Activated naive CD4-positive, alpha-beta T cell treated with anti-CD3 and anti-CD28 coated beads, Interleukin-2, amount 10 ng/mL, durations not matched to agents 7 days and 5 days (primary cell): ENCODE measurements at regions of chr1 and their contacts with region 1.

Region 1: GRCh38 chr1:31923901-31924535 is 14.2 kb downstream of the PTP4A2 start:
- DNase-seq: no peak
- H3K4me3 Mint-ChIP-seq: peak overlapping the region; percentile 24
- H3K27ac Mint-ChIP-seq: peak overlapping the region; percentile 79
- H3K4me1 Mint-ChIP-seq: peaks cover 83% of the 10 kb centered on the region
- H3K27me3 Mint-ChIP-seq: no peaks in the 10 kb centered on the region

Region 2: DNA sequence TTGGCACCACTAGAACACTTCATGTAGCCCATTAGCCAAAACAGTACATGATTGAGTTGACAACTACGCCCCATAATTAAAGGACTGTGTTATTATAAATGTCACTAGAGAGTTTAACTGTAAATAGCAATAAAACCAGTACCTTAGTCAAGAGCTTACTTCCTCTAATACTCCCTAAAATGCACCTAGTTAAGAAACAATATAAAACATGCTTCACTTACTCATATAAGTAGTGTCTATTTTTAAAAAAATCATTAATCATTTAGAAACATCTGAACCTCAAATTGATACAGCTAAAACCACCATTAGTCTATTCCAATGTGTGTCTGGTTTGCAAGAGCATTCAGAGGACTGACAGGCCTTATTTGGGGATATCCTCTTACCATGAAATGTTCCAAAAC is 11.2 kb before region 1 on chr1:
- CTCF ChIA-PET with region 1: interaction called, 10 read pairs
- DNase-seq: no peak
- H3K4me3 Mint-ChIP-seq: no peak overlapping the region
- H3K27ac Mint-ChIP-seq: no peak overlapping the region
- H3K4me1 Mint-ChIP-seq: peaks cover 52% of the 10 kb centered on the region
- H3K27me3 Mint-ChIP-seq: no peaks in the 10 kb centered on the region